Activated B cell treated with CpG ODN at 0.5 μM for 24 hours (primary cell): ENCODE measurements at regions of chr12 and their contacts with region 1.

Region 1: DNA sequence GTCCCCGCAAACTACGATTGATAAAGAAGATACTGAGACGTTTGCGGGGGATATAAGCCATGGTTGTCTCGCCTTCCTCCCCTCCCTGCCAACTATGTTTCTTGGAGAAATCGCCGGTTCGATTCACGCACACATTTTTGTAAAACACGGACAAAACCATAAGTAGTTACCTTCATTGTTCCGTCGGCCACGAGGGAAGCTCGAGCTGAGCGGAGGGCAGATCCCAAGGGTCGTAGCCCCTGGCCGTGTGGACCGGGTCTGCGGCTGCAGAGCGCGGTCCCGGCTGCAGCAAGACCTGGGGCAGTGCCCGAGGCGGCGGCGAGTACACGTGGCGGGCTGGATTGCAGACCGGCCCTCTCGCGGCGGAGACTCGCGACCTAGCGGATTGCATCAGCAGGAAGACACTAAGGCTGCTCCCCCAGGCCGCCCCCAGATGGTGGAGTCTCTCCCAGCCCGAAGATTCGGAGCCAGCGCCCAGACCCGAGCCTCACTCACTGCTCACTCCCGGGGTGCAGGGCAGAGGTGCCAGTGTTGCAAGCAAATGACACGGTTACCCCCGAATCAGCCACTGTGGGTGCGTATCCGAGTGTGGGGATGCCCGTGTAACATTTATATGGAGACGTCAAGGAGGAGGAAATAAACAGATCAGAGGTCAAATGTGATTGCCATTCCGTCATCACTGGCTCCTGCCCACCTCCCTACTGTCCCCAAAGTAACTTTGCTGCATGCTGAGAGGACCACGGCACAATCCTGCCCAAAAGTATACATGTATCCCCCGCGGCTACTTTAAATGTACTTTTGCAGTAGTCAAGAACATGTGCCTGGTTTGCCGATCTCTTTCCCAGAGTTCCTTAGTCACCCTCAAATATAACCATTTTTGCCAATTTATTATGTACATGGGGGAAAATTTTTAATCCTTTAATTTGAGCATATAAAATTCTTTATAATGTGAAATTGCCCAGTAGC is at the start of gene BCAT1:
- DNase-seq: peak; percentile 64
- ATAC-seq: peak; percentile 72
- H3K4me3 Mint-ChIP-seq: peak within 1 kb of the TSS; percentile 97
- H3K27ac Mint-ChIP-seq: peak within 1 kb of the TSS; percentile 92
- H3K4me1 Mint-ChIP-seq: peaks cover 72% of the 10 kb centered on the region
- H3K27me3 Mint-ChIP-seq: peaks cover 5% of the 10 kb centered on the region
- CTCF ChIP-seq: no peak
- total RNA-seq, gene BCAT1: 69.6 and 69.8 TPM in 2 replicates

Region 2: GRCh38 chr12:24852420-24852819 is 96.6 kb before region 1 on chr12:
- CTCF ChIA-PET with region 1: no interaction called
- POLR2A ChIA-PET with region 1: interaction called, 7 read pairs
- intact Hi-C with region 1: loop called (anchors 5 kb)
- DNase-seq: no peak
- ATAC-seq: no peak
- H3K4me3 Mint-ChIP-seq: no peak overlapping the region
- H3K27ac Mint-ChIP-seq: no peak overlapping the region
- H3K4me1 Mint-ChIP-seq: peaks cover 14% of the 10 kb centered on the region
- H3K27me3 Mint-ChIP-seq: no peaks in the 10 kb centered on the region
- CTCF ChIP-seq: no peak

Region 3: DNA sequence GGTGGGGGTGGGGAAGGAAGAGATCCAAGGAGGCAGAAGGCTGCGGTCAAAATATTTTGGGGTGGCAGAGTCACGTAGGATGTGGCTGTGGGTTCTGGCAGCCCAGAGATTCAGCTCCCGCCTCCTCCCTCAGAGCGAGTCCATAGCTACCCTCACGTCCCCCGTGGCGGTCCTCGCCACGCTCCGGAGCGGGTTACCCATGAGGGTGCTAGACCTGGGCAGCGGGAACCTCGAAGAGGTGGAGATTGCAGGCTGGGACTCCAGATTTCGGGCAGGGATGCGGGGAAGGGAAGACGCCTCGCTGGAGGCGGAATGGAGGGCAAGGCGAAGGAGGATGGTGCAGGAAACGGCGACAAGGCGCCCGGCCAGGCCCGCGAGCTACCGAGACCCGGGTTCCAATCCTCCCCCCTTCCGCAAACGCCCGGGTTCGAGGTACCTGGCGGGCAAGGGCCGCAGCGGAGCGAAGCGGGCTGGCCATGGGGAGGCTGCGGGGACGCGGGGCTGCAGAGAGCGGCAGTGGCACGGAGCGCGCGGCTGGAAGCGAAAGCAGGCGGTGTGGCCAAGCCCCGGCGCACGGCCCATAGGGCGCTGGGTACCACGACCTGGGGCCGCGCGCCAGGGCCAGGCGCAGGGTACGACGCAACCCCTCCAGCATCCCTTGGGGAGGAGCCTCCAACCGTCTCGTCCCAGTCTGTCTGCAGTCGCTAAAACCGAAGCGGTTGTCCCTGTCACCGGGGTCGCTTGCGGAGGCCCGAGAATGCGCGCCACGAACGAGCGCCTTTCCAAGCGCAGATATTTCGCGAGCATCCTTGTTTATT is 46.3 kb before region 1 on chr12:
- CTCF ChIA-PET with region 1: no interaction called
- POLR2A ChIA-PET with region 1: no interaction called
- intact Hi-C with region 1: loop called (anchors 2 kb)
- DNase-seq: peak; percentile 26
- ATAC-seq: peak; percentile 40
- H3K4me3 Mint-ChIP-seq: peak overlapping the region; percentile 89
- H3K27ac Mint-ChIP-seq: no peak overlapping the region
- H3K4me1 Mint-ChIP-seq: peaks cover 23% of the 10 kb centered on the region
- H3K27me3 Mint-ChIP-seq: peaks cover 19% of the 10 kb centered on the region
- CTCF ChIP-seq: no peak

Region 4: GRCh38 chr12:24931666-24932405 is 17.2 kb before region 1 on chr12:
- CTCF ChIA-PET with region 1: no interaction called
- POLR2A ChIA-PET with region 1: interaction called, 7 read pairs
- intact Hi-C with region 1: loop called (anchors 1 kb)
- DNase-seq: no peak
- ATAC-seq: peak; percentile 94
- H3K4me3 Mint-ChIP-seq: peak overlapping the region; percentile 40
- H3K27ac Mint-ChIP-seq: peak overlapping the region; percentile 72
- H3K4me1 Mint-ChIP-seq: peaks cover 26% of the 10 kb centered on the region
- H3K27me3 Mint-ChIP-seq: no peaks in the 10 kb centered on the region
- CTCF ChIP-seq: no peak

Region 5: DNA sequence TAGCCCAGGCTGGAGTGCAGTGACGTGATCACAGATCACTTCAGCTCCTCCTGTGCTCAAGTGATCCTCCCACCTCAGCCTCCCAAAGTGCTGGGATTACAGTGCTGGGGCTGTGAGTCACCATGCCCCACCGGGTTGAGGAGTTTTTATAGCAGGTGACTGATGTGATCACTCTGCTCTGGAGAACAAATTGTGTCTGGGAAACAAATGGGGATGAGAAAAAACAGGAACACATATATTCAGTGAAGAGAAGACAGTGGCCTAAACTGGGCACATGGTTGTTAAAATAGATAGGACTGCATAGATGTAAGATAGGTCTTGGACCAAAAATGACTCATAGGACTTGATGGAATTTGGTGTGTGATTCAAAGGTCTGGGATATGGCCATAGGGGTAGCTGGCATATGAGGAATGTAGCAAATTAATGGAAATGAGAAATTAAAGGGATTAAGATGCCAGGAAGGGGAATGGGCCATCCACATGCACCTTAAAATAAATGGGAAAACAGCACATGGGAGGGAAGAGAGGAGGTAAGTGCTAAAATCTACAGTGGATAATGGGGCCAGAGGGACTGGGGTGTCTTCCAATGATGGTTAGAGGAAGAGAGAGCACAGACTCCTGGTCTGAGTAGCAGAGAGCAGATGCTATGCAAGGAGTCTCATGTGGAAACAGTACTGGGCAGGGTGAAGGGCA is 11.3 kb before region 1 on chr12:
- CTCF ChIA-PET with region 1: no interaction called
- POLR2A ChIA-PET with region 1: no interaction called
- intact Hi-C with region 1: loop called (anchors 1 kb)
- DNase-seq: no peak
- ATAC-seq: no peak
- H3K4me3 Mint-ChIP-seq: no peak overlapping the region
- H3K27ac Mint-ChIP-seq: no peak overlapping the region
- H3K4me1 Mint-ChIP-seq: peaks cover 1% of the 10 kb centered on the region
- H3K27me3 Mint-ChIP-seq: no peaks in the 10 kb centered on the region
- CTCF ChIP-seq: no peak

Region 6: GRCh38 chr12:25518512-25518911 is 569.5 kb after region 1 on chr12:
- CTCF ChIA-PET with region 1: no interaction called
- POLR2A ChIA-PET with region 1: no interaction called
- intact Hi-C with region 1: no loop called
- DNase-seq: no peak
- ATAC-seq: no peak
- H3K4me3 Mint-ChIP-seq: no peak overlapping the region
- H3K27ac Mint-ChIP-seq: no peak overlapping the region
- H3K4me1 Mint-ChIP-seq: no peaks in the 10 kb centered on the region
- H3K27me3 Mint-ChIP-seq: peaks cover 16% of the 10 kb centered on the region
- CTCF ChIP-seq: no peak